ENCODE measurements at regions of chr9 and their contacts with region 1.

Region 1: DNA sequence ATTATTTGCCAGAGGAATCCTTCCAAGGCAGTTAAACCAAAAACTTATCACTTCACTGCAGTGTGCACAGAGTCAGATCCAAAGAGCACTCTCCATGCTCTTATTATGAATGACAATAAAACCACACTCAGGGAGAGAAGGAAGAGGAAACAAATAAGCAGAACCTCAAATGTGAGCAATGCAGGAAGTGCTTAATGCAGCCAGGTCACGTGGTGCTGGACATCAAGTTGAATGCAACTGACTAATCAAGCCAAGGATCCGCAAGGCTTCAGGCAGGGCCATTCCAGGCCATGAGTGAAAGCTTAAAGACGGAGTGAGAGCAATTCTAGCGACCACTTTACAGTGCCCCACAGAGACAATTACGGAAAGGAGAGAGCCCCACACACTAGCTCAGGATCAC is 230.4 kb upstream of the PUM3 start:
- DNase-seq: no peak
- ATAC-seq: no peak
- H3K4me3 ChIP-seq: no peak overlapping the region
- H3K27ac ChIP-seq: no peak overlapping the region
- H3K4me1 ChIP-seq: no peaks in the 10 kb centered on the region
- H3K27me3 ChIP-seq: no peaks in the 10 kb centered on the region
- CTCF ChIP-seq: no peak
- POLR2A ChIP-seq: no peak
- RAD21 ChIP-seq: no peak

Region 2: DNA sequence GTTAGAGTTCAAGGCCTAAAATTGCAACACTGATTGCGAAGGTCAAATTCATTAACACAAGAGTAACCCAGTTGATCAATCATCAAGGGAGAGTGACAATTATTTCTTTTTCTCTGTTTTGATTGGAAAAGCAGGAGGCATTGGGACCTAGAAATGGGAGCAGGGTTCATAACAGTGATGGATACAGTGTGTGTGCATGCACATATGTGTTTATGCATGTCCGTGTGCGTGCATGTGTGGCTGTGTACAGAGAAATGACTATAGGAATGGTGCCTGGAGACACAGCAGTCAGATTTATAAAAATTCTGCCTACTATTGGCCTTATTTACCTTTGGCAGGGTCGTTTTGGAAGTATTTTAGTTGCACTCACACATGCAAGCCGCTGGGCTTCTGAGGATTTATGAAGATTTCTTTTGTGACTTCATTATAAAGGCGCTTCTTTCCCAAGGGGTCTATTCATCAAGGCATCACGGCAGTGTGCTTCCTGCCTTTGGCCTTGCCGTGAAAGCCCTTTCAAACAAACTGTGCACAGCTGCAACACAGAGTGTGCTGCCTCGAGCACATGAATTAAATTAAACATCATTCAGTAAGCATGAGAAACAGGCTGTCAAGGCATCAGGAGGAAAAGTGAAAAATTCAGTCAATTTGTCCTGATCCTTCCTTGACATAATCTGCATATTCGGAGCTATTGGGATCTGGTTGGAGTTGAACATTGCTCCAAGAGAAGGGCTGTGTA is 107.5 kb before region 1 on chr9:
- CTCF ChIA-PET with region 1: no interaction called
- POLR2A ChIA-PET with region 1: no interaction called
- dilution Hi-C with region 1: no loop called
- in situ Hi-C with region 1: loop called (anchors 25 kb)
- intact Hi-C with region 1: no loop called
- DNase-seq: no peak
- ATAC-seq: no peak
- H3K4me3 ChIP-seq: no peak overlapping the region
- H3K27ac ChIP-seq: no peak overlapping the region
- H3K4me1 ChIP-seq: no peaks in the 10 kb centered on the region
- H3K27me3 ChIP-seq: no peaks in the 10 kb centered on the region
- CTCF ChIP-seq: no peak
- POLR2A ChIP-seq: no peak
- RAD21 ChIP-seq: no peak

Region 3: GRCh38 chr9:3088166-3088702 is 14.0 kb after region 1 on chr9:
- CTCF ChIA-PET with region 1: no interaction called
- POLR2A ChIA-PET with region 1: no interaction called
- dilution Hi-C with region 1: no loop called
- in situ Hi-C with region 1: no loop called
- intact Hi-C with region 1: no loop called
- DNase-seq: no peak
- ATAC-seq: no peak
- H3K4me3 ChIP-seq: no peak overlapping the region
- H3K27ac ChIP-seq: no peak overlapping the region
- H3K4me1 ChIP-seq: no peaks in the 10 kb centered on the region
- H3K27me3 ChIP-seq: no peaks in the 10 kb centered on the region
- CTCF ChIP-seq: no peak
- POLR2A ChIP-seq: no peak
- RAD21 ChIP-seq: no peak